HepG2 (cell line): ENCODE measurements at regions of chr11 and their contacts with region 1.

Region 1: DNA sequence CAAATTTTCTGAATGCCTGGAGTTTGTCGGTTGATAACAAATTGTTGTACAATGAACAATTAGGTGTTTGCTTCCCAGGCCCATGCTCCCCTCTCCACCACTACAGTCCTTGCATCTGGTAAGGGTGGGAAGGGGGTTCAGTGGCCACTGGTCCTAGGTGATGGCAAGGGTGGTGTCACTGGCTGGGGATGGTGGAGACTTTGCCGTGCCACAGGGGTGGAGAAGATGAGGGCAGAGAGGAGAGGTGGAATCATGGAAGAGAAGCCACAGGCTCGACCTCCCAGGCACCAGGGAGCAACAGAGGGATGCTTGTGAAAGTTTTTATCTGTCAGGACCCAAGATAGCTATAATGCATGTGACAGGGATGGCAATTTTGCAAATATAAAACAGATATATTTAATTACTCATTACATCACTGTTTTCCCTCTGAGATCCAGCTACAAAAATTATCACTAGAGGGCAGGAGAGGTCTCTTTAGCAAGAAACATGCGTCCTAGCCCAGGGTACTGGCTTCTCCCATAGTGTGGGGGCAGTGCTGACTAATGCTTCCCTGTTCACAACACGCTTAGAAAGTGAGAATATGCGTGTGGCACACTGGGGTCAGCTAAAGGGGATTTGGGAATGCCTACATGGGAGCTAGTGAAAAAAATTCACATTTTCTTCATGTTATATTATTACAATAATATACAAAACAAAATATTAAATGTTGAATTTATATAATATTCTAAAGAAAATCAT is 49.0 kb upstream of the AMPD3 start:
- DNase-seq: peak; percentile 80
- ATAC-seq: peak; percentile 92
- H3K4me3 ChIP-seq: no peak overlapping the region
- H3K27ac ChIP-seq: no peak overlapping the region
- H3K4me1 ChIP-seq: peaks cover 8% of the 10 kb centered on the region
- H3K27me3 ChIP-seq: peaks cover 0 to 2% of the 10 kb centered on the region in 2 experiments; a peak in 1 of 5 replicates
- CTCF ChIP-seq: peak; percentile 82
- EP300 ChIP-seq: no peak
- POLR2A ChIP-seq: no peak
- RAD21 ChIP-seq: peak; percentile 75

Region 2: GRCh38 chr11:10356161-10356560 is 49.9 kb before region 1 on chr11:
- CTCF ChIA-PET with region 1: no interaction called
- POLR2A ChIA-PET with region 1: no interaction called
- in situ Hi-C with region 1: no loop called
- intact Hi-C with region 1: no loop called
- DNase-seq: no peak
- ATAC-seq: no peak
- H3K4me3 ChIP-seq: no peak overlapping the region
- H3K27ac ChIP-seq: no peak overlapping the region
- H3K4me1 ChIP-seq: peaks cover 18% of the 10 kb centered on the region
- H3K27me3 ChIP-seq: 0 out of 5 replicates have a peak, but pooled peaks cover 0 to 1% of the 10 kb centered on the region in 2 experiments
- CTCF ChIP-seq: no peak
- EP300 ChIP-seq: no peak
- POLR2A ChIP-seq: no peak
- RAD21 ChIP-seq: no peak

Region 3: GRCh38 chr11:10623797-10624761 is 218.1 kb after region 1 on chr11:
- CTCF ChIA-PET with region 1: no interaction called
- POLR2A ChIA-PET with region 1: no interaction called
- in situ Hi-C with region 1: loop called (anchors 10 kb)
- intact Hi-C with region 1: no loop called
- DNase-seq: peak; percentile 37
- ATAC-seq: peak; percentile 57
- H3K4me3 ChIP-seq: no peak overlapping the region
- H3K27ac ChIP-seq: no peak overlapping the region
- H3K4me1 ChIP-seq: no peaks in the 10 kb centered on the region
- H3K27me3 ChIP-seq: peaks cover 11 to 27% of the 10 kb centered on the region in 2 experiments
- CTCF ChIP-seq: peak; percentile 58
- EP300 ChIP-seq: no peak
- POLR2A ChIP-seq: no peak
- RAD21 ChIP-seq: peak; percentile 46; the same call in 1 of the 2 replicates

Region 4: DNA sequence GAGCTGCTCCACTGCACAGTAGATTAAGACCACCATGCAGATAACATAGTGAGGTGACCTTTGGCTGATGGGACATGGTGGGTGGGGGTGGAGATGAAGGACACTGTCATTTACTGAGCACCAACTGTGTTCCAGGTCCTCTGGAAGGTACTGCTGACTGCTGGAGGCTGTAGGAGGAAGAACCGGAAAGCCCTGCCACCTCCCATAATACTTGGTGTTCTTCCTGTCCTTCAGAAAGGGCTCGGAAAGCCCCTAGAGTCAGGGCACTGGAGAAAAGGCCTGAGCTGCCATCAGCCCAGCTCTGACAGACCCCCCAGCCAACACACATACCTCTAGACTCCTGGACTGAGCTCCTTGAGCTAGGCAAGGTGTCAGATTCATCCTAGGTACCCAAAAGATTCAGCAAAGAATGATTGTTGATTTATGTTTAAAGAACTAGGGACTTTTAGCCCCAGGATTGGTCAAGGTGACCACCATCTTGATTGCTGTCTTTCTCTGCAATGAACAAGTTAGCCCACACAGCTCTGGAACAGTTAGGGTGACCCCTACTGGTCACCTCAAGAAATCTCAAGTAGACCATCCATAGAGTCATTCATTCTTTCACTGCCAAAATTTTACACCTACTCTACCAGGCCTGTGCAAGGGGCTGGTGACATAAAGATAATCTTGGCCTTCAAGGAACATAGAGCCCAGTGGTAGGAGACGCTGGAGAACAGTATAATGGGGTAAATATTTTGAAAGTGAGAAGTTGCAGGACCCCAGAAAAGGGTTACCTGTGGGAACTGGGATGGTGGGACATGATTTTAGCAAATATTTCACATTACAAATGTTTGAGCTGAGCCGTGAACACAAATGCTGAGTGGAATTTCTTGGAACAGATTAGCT is 248.1 kb after region 1 on chr11:
- CTCF ChIA-PET with region 1: interaction called, 10 read pairs
- POLR2A ChIA-PET with region 1: no interaction called
- in situ Hi-C with region 1: no loop called
- intact Hi-C with region 1: loop called (anchors 1 kb)
- DNase-seq: peak; percentile 57
- ATAC-seq: peak; percentile 71
- H3K4me3 ChIP-seq: no peak overlapping the region
- H3K27ac ChIP-seq: no peak overlapping the region
- H3K4me1 ChIP-seq: peaks cover 20% of the 10 kb centered on the region
- H3K27me3 ChIP-seq: peaks cover 0 to 10% of the 10 kb centered on the region in 2 experiments; a peak in 2 of 5 replicates
- CTCF ChIP-seq: peak; percentile 80
- EP300 ChIP-seq: no peak
- POLR2A ChIP-seq: no peak
- RAD21 ChIP-seq: peak; percentile 64